ENCODE measurements at regions of chr1 and their contacts with region 1.

Region 1: GRCh38 chr1:19010995-19011844 is 54.7 kb upstream of the IFFO2 start:
- DNase-seq: peak; percentile 81 to 87 (median 84)
- ATAC-seq: peak; percentile 55 to 68 (median 60)
- H3K4me3 ChIP-seq: peak overlapping the region in 2 of 3 donors; percentile 18 to 31
- H3K27ac ChIP-seq: peak overlapping the region; percentile 78 to 94 (median 87)
- H3K4me1 ChIP-seq: peaks cover 0 to 77% (median 31%) of the 10 kb centered on the region in 4 donors
- H3K27me3 ChIP-seq: no peaks in the 10 kb centered on the region
- CTCF ChIP-seq: no peak
- POLR2A ChIP-seq: peak; percentile 9

Region 2: DNA sequence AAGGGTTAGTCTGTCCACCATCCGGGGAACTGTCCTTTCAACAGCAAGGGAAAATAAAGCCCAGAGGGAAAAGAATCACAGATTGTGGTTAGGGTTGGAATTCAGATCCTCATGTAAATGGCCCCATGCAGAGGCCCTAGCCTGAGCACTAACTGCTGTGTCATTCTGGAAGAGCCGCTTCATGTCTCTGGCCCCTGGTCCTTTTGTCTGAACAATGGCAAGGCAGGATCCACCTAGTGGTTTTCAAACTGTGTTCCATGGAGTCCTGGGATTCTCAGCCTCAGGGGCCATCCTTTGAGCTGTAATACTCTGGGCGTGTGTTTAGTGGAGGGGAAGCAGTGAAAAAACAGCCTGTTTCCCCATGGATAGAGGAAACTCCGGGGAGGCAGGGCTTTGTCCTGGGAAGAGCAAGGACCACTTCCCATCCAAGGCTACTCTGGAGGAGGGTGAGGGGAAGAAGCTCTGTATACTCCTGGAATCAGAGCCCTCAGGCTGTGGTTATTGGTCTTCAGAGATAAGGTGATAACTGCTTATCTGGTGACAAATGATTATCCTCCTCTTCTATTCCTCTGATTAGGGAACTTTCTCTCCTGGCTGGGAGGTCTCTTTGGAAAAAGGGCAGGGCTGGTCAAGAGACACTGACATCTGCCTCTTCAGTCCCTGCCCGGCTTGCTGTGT is 361.4 kb before region 1 on chr1:
- intact Hi-C with region 1: no loop called
- DNase-seq: no peak
- ATAC-seq: no peak
- H3K4me3 ChIP-seq: no peak overlapping the region
- H3K27ac ChIP-seq: no peak overlapping the region
- H3K4me1 ChIP-seq: no peaks in the 10 kb centered on the region
- H3K27me3 ChIP-seq: peaks cover 0 to 40% of the 10 kb centered on the region in 2 donors
- CTCF ChIP-seq: no peak
- POLR2A ChIP-seq: no peak

Region 3: GRCh38 chr1:18875107-18875795 is 136.0 kb before region 1 on chr1:
- intact Hi-C with region 1: no loop called
- DNase-seq: peak; percentile 63 to 78 (median 75)
- ATAC-seq: peak; percentile 59 to 66 (median 63)
- H3K4me3 ChIP-seq: no peak overlapping the region
- H3K27ac ChIP-seq: no peak overlapping the region
- H3K4me1 ChIP-seq: peaks cover 0 to 9% (median 0%) of the 10 kb centered on the region in 4 donors
- H3K27me3 ChIP-seq: no peaks in the 10 kb centered on the region
- CTCF ChIP-seq: peak; percentile 59 to 72 (median 70)
- POLR2A ChIP-seq: no peak

Region 4: DNA sequence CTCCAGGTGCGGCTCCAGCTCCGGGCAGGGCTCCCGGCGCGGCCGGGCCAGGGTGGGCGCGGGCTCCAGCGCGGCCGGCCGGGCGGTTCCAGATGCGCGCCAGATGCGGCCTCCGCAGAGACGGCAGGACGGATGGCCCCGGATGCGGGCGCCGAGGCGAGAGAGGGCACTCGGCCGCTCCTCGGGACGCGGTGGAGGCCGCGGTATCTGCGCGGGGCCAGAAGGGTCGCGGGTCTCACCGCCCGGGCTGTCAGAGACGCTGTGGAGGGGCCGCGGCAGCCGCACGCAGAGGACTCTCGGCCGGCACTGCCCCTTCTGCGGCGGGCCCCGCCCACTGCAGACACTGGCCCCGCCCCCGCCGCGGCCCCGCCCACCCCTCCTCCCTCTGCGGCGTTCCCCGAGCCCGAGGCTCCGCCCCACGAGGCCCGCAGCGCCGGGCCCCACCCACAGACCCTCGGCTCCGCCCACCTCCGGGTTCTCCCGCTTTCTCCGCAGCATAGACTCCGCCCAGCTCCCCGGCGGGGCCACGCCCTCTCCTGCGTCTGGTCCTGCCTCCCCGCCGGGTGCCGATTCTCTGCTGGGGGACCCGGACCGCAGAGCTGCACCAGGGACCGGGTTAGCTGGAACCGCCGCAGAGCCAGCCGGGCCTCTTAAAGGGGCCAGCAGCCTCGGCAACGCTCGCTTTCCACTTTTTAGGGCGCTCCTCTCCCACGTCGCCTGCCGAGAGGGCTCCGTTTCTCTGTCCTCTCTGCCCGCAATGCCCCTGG is 54.7 kb before region 1 on chr1 and contains the start of gene IFFO2:
- intact Hi-C with region 1: loop called in 1 of 2 experiments (anchors 10 kb)
- DNase-seq: peak; percentile 99 to 100 (median 99)
- ATAC-seq: peak; percentile 92 to 98 (median 96)
- H3K4me3 ChIP-seq: peak within 1 kb of the TSS; percentile 67 to 87 (median 78)
- H3K27ac ChIP-seq: peak within 1 kb of the TSS; percentile 26 to 88 (median 47)
- H3K4me1 ChIP-seq: peaks cover 0 to 34% (median 10%) of the 10 kb centered on the region in 4 donors
- H3K27me3 ChIP-seq: no peaks in the 10 kb centered on the region
- CTCF ChIP-seq: no peak
- POLR2A ChIP-seq: peak; percentile 95
- total RNA-seq, gene IFFO2: 2.9 to 12.7 (median 7.2) TPM

Region 5: GRCh38 chr1:19067182-19067911 is 56.1 kb after region 1 on chr1:
- intact Hi-C with region 1: loop called (anchors 5 to 10 kb)
- DNase-seq: peak; percentile 91 to 95 (median 95)
- ATAC-seq: peak; percentile 59 to 76 (median 70)
- H3K4me3 ChIP-seq: no peak overlapping the region
- H3K27ac ChIP-seq: peak overlapping the region; percentile 85 to 96 (median 87)
- H3K4me1 ChIP-seq: peaks cover 0 to 64% (median 30%) of the 10 kb centered on the region in 4 donors
- H3K27me3 ChIP-seq: no peaks in the 10 kb centered on the region
- CTCF ChIP-seq: peak in 1 of 4 donors; percentile 13
- POLR2A ChIP-seq: peak; percentile 40

Region 6: GRCh38 chr1:19074902-19075721 is 63.9 kb after region 1 on chr1:
- intact Hi-C with region 1: loop called in 1 of 2 experiments (anchors 10 kb)
- DNase-seq: peak in 2 of 3 donors; percentile 62 to 76
- ATAC-seq: peak; percentile 42 to 47 (median 44)
- H3K4me3 ChIP-seq: no peak overlapping the region
- H3K27ac ChIP-seq: peak overlapping the region in 2 of 3 donors; percentile 47 to 51
- H3K4me1 ChIP-seq: peaks cover 0 to 69% (median 34%) of the 10 kb centered on the region in 4 donors
- H3K27me3 ChIP-seq: no peaks in the 10 kb centered on the region
- CTCF ChIP-seq: no peak
- POLR2A ChIP-seq: peak; percentile 9

Region 7: GRCh38 chr1:19186001-19186400 is 174.8 kb after region 1 on chr1:
- intact Hi-C with region 1: no loop called
- DNase-seq: no peak
- ATAC-seq: no peak
- H3K4me3 ChIP-seq: no peak overlapping the region
- H3K27ac ChIP-seq: no peak overlapping the region
- H3K4me1 ChIP-seq: peaks cover 0 to 6% (median 0%) of the 10 kb centered on the region in 4 donors
- H3K27me3 ChIP-seq: no peaks in the 10 kb centered on the region
- CTCF ChIP-seq: no peak
- POLR2A ChIP-seq: no peak